ENCODE measurements at regions of chr18 and their contacts with region 1.

Region 1: GRCh38 chr18:45212181-45213039 is 402.9 kb upstream of the SLC14A2 start:
- DNase-seq: peak; percentile 67 to 82
- ATAC-seq: peak; percentile 96 to 100
- H3K4me3 ChIP-seq: no peak overlapping the region
- H3K27ac ChIP-seq: no peak overlapping the region
- H3K4me1 ChIP-seq: no peaks in the 10 kb centered on the region
- H3K27me3 ChIP-seq: no peaks in the 10 kb centered on the region
- CTCF ChIP-seq: peak; percentile 75 to 93 (median 81)
- POLR2A ChIP-seq: no peak

Region 2: DNA sequence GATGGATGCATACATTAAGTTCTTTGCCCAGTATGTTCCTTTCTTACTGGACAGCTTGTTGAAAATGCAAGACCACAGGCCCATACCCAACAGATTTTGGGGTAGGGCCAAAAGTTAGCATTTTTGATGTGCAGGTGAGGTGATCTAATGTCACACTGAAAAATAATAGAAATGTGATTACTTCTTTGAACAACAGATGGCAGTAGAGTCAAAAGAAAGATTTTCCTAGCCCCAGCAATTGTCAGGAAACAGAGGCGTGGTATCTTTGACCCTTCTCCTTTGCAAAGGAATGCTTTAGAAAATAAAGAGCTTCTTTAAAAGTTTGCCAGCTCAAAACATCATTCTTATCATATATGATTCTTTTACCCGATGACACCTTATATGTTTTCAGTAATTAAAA is 1591.5 kb before region 1 on chr18:
- in situ Hi-C with region 1: no loop called
- intact Hi-C with region 1: loop called (anchors 10 kb)
- DNase-seq: no peak
- ATAC-seq: no peak
- H3K4me3 ChIP-seq: no peak overlapping the region
- H3K27ac ChIP-seq: no peak overlapping the region
- H3K4me1 ChIP-seq: no peaks in the 10 kb centered on the region
- H3K27me3 ChIP-seq: no peaks in the 10 kb centered on the region
- CTCF ChIP-seq: peak; percentile 39 to 56 (median 51)
- POLR2A ChIP-seq: no peak

Region 3: DNA sequence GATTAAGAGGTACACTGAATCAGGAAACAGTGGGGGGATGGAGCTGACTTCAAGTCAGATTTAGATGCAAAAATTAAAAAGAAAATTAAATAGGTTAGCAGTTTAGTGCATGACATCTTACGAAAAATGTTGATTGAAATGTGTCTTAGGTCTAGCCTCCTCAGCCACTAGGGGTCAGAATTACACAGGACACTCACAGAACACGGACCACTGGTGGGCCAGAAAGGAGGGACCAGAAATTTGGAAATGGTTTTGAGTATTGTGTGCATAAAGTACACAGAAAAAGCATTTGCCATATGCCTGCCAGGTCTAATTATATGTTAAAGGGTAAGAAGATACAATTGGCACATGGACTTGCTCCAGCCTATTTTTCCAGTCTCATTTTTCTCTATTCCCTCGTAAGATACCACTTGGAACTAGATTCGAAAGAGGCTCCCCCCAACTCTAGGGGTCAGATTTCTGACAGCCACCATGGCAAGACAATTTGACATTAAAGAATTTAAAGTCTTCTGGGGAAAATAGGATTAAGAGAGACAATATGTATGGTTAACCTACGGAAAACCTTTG is 1082.0 kb before region 1 on chr18:
- in situ Hi-C with region 1: loop called in 1 of 4 experiments (anchors 25 kb)
- intact Hi-C with region 1: no loop called
- DNase-seq: no peak
- ATAC-seq: no peak
- H3K4me3 ChIP-seq: no peak overlapping the region
- H3K27ac ChIP-seq: no peak overlapping the region
- H3K4me1 ChIP-seq: no peaks in the 10 kb centered on the region
- H3K27me3 ChIP-seq: no peaks in the 10 kb centered on the region
- CTCF ChIP-seq: peak; percentile 31 to 63 (median 50)
- POLR2A ChIP-seq: no peak

Region 4: DNA sequence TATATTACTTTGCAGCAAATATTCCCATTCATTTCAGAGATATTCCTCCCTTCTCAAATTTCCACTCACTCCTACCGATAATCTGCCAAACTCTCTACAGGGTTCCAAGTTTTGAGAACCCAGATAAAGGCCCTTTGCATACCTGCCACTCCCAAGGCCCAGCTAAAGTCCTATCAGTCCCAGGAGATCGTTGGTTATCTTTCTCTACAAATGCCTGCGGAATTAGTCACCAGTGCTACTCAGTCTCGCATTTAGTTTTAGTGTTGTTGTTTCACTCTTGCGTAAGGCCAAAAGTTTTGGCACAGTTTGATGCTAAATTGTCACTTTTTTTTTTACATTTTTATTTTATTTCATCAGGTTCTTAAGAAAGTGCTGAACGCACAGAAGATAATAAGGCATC is 561.0 kb before region 1 on chr18:
- in situ Hi-C with region 1: loop called in 1 of 4 experiments (anchors 25 kb)
- intact Hi-C with region 1: no loop called
- DNase-seq: no peak
- ATAC-seq: no peak
- H3K4me3 ChIP-seq: no peak overlapping the region
- H3K27ac ChIP-seq: no peak overlapping the region
- H3K4me1 ChIP-seq: no peaks in the 10 kb centered on the region
- H3K27me3 ChIP-seq: no peaks in the 10 kb centered on the region
- CTCF ChIP-seq: no peak
- POLR2A ChIP-seq: no peak

Region 5: GRCh38 chr18:44895176-44895798 is 317.1 kb before region 1 on chr18:
- in situ Hi-C with region 1: no loop called
- intact Hi-C with region 1: loop called (anchors 10 kb)
- DNase-seq: peak; percentile 32 to 69
- ATAC-seq: peak; percentile 85 to 97
- H3K4me3 ChIP-seq: no peak overlapping the region
- H3K27ac ChIP-seq: no peak overlapping the region
- H3K4me1 ChIP-seq: peaks cover 14 to 25% of the 10 kb centered on the region in 2 donors
- H3K27me3 ChIP-seq: no peaks in the 10 kb centered on the region
- CTCF ChIP-seq: peak; percentile 42 to 65 (median 54)
- POLR2A ChIP-seq: no peak